ENCODE measurements at regions of chr20 and their contacts with region 1.

Region 1: GRCh38 chr20:6623989-6624388 is 143.5 kb upstream of the BMP2 start:
- DNase-seq: peak; percentile 65 to 77
- H3K4me3 ChIP-seq: no peak overlapping the region
- H3K4me3 Mint-ChIP-seq: peak overlapping the region; percentile 51
- H3K27ac Mint-ChIP-seq: no peak overlapping the region
- H3K4me1 ChIP-seq: peaks cover 15% of the 10 kb centered on the region
- H3K4me1 Mint-ChIP-seq: no peaks in the 10 kb centered on the region
- H3K27me3 ChIP-seq: no peaks in the 10 kb centered on the region
- H3K27me3 Mint-ChIP-seq: no peaks in the 10 kb centered on the region
- CTCF ChIP-seq: no peak

Region 2: DNA sequence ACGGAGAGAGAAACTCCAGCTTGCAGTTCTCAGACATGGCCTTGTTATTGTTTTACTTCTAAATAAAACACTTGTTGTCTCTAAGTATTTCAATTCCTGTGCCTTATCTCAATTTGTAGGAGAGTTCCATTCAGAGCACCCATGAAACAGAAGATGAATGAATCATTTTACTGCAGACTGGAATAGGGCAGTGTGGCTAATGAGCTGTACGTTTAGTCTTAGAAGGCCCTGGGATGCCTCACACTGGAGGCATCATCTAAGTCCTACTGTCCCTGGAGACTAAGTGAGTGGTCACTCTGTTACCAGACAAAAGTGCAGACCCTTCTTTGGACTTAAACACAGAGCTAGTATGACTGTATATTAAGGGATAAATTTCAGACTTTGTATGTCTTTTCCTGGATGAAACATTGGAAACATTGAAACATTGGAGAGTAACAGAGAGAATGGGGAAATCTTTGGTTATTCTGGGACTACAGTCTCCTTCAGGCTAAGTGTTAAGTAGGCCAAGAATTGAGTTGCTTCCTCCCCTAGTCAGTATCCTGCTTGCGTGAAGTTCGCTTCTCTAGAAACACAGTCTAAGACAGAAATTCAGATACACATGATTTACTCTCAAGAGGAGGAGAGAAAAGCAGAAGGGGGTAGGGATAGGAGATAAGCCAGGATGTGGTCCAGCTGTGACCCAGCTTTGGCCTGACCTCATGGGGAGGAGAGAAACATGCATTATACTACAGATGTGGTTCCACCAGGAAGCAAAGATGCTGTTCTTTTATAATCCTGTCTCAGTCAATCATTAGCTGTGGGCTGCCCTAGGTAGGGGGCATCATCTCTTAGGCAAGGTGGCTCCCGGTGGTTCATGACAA is 23.9 kb before region 1 on chr20:
- CTCF ChIA-PET with region 1: no interaction called
- POLR2A ChIA-PET with region 1: no interaction called
- intact Hi-C with region 1: no loop called
- DNase-seq: no peak
- H3K4me3 ChIP-seq: no peak overlapping the region
- H3K4me3 Mint-ChIP-seq: no peak overlapping the region
- H3K27ac Mint-ChIP-seq: no peak overlapping the region
- H3K4me1 ChIP-seq: no peaks in the 10 kb centered on the region
- H3K4me1 Mint-ChIP-seq: no peaks in the 10 kb centered on the region
- H3K27me3 ChIP-seq: no peaks in the 10 kb centered on the region
- H3K27me3 Mint-ChIP-seq: peaks cover 2% of the 10 kb centered on the region
- CTCF ChIP-seq: no peak

Region 3: DNA sequence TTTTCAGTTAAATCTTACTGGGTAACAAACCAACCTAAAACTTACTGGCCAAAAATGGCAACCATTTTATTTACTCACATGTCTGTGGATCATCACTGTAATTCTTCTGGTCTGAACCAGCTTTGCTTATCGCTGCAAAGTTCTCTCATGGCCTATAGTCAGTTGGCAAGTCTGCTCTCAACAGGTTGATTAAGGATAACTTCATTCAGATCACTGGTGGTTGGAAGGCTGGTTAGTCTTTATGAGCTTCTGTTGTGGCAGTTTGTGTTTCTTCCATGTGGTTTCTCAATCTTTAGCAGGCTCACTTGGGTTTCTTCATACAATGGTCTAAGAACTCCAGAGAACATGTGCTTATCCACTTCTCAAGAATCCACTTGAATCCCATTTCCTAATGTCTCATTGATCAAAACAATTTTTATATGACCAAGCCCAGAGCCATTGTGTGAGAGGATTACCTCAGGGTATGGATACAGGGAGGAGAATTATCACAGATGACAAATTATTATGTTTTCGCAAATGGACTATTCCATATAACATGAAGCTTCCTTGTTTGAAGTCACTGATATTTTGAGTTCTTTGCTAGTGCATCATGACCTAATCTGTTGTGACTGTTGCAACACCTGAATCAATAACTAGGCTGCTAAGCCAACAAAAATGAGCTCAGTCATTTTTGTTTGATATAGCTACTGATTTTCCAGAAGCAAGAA is 11.9 kb before region 1 on chr20:
- CTCF ChIA-PET with region 1: no interaction called
- POLR2A ChIA-PET with region 1: no interaction called
- intact Hi-C with region 1: loop called (anchors 1 kb)
- DNase-seq: no peak
- H3K4me3 ChIP-seq: no peak overlapping the region
- H3K4me3 Mint-ChIP-seq: no peak overlapping the region
- H3K27ac Mint-ChIP-seq: no peak overlapping the region
- H3K4me1 ChIP-seq: no peaks in the 10 kb centered on the region
- H3K4me1 Mint-ChIP-seq: no peaks in the 10 kb centered on the region
- H3K27me3 ChIP-seq: no peaks in the 10 kb centered on the region
- H3K27me3 Mint-ChIP-seq: no peaks in the 10 kb centered on the region
- CTCF ChIP-seq: no peak

Region 4: DNA sequence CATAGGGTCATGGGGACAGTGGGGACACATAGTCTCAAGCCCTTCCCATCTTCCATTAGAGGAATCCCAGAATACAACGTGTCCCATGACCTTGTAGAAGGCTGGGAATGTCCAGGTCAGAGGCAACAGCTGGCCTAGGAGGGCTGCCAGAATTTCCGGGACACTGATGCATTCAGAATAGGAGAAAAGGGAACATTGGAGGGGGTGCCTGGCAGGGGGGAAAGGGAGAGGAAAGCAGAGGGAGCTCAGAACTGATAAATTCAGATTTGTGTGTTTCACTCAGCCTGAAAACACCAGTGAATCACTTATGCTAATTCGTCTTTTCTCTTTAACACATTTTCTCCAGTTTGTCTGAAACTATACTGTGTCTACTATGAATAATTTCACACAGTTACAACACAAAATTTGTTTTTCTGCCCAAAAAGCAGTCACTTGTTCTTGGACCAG is 108.0 kb after region 1 on chr20:
- CTCF ChIA-PET with region 1: no interaction called
- POLR2A ChIA-PET with region 1: no interaction called
- intact Hi-C with region 1: no loop called
- DNase-seq: no peak
- H3K4me3 ChIP-seq: no peak overlapping the region
- H3K4me3 Mint-ChIP-seq: no peak overlapping the region
- H3K27ac Mint-ChIP-seq: no peak overlapping the region
- H3K4me1 ChIP-seq: peaks cover 15% of the 10 kb centered on the region
- H3K4me1 Mint-ChIP-seq: peaks cover 21% of the 10 kb centered on the region
- H3K27me3 ChIP-seq: no peaks in the 10 kb centered on the region
- H3K27me3 Mint-ChIP-seq: no peaks in the 10 kb centered on the region
- CTCF ChIP-seq: no peak

Region 5: DNA sequence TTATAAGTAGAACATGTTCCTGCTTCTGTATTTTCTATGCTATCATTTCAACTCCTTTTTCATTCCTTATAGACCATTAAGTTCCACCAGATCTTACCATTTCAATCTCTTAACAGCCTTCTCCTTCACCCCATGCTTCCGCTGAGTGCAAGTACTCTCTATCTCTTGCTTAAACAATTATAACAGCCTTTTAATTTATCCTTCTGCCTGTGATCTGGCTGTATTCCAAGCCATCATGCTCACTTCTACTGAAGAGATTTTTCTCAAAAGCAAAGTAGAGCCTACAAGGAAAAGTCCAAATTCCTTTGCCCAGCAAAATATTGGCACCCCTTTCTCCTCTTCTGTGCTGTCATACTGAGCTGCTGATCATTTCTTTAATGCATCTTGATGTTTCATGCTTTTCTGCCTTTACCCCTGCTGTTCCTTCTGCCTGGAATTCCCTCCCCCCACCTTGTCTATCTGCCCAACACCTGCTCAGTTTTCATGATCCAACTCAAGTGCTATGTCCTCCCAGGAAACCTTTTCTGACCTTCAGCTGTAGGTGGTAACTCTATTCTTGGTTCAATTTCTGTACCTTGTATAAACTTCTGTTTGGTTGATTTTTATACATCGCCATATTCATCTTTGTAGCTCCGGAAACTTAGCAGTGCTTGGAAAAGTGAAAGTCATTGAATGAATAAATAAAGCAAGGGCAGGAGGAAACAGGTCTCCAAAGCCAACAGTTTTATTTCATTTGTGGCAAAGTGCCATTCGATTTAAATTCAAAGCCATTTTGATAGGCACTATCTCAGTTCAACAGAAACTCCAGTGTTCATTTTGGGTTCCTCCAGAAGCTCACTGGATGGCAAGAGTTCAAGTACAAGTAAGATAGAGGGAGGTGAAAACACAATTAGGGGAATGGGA is 133.0 kb after region 1 on chr20:
- CTCF ChIA-PET with region 1: no interaction called
- POLR2A ChIA-PET with region 1: no interaction called
- intact Hi-C with region 1: no loop called
- DNase-seq: no peak
- H3K4me3 ChIP-seq: no peak overlapping the region
- H3K4me3 Mint-ChIP-seq: no peak overlapping the region
- H3K27ac Mint-ChIP-seq: no peak overlapping the region
- H3K4me1 ChIP-seq: no peaks in the 10 kb centered on the region
- H3K4me1 Mint-ChIP-seq: no peaks in the 10 kb centered on the region
- H3K27me3 ChIP-seq: no peaks in the 10 kb centered on the region
- H3K27me3 Mint-ChIP-seq: no peaks in the 10 kb centered on the region
- CTCF ChIP-seq: no peak